Activated naive CD4-positive, alpha-beta T cell treated with anti-CD3 and anti-CD28 coated beads for 36 hours (primary cell): ENCODE measurements at regions of chr5 and their contacts with region 1.

Region 1: DNA sequence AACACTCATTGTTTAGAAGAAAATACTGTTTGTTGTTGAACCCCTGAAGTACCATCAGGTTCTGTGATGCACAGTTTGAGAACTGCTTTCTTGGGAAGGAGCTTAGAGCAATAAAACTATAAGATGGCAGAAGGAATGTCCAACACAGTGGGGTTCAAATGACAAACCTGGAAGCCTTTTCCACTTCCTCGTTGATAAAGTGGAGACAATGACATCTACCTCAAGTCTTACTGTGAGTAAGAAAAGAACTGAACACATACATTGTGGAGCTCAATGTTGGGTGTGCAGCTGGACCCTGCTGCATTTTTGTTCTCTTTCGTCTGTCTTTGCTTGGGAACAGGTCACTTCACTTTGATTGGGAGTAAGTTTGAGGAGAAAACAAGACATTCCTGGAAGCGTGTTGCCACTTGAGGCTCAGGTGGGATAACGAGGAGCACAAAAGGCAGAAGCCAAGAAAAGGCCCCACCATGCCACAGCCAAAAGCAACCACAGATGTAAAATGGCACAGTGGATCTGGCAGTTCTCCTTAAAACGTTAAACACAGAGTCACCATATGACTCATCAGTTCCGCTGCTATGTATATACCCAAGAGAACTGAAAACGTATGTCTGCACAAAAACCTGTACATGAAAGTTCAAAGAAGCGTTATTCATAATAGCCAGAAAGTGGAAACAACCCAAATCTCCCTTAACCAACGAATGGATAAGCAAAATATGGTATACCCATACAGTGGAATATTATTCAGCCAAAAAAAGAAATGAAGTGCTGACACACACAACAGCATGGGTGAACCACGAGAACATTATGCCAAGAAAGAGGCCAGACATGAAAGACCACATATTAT is 42.9 kb upstream of the SUB1 start:
- DNase-seq: peak; percentile 51
- H3K4me3 Mint-ChIP-seq: no peak overlapping the region
- H3K27ac Mint-ChIP-seq: peak overlapping the region; percentile 79
- H3K4me1 Mint-ChIP-seq: peaks cover 40% of the 10 kb centered on the region
- H3K27me3 Mint-ChIP-seq: no peaks in the 10 kb centered on the region

Region 2: GRCh38 chr5:31962871-31963307 is 579.5 kb before region 1 on chr5:
- CTCF ChIA-PET with region 1: no interaction called
- intact Hi-C with region 1: no loop called
- DNase-seq: no peak
- H3K4me3 Mint-ChIP-seq: no peak overlapping the region
- H3K27ac Mint-ChIP-seq: no peak overlapping the region
- H3K4me1 Mint-ChIP-seq: peaks cover 2% of the 10 kb centered on the region
- H3K27me3 Mint-ChIP-seq: no peaks in the 10 kb centered on the region

Region 3: GRCh38 chr5:32462618-32463017 is 79.8 kb before region 1 on chr5:
- CTCF ChIA-PET with region 1: no interaction called
- intact Hi-C with region 1: no loop called
- DNase-seq: peak; percentile 71
- H3K4me3 Mint-ChIP-seq: no peak overlapping the region
- H3K27ac Mint-ChIP-seq: peak overlapping the region; percentile 89
- H3K4me1 Mint-ChIP-seq: peaks cover 13% of the 10 kb centered on the region
- H3K27me3 Mint-ChIP-seq: no peaks in the 10 kb centered on the region

Region 4: DNA sequence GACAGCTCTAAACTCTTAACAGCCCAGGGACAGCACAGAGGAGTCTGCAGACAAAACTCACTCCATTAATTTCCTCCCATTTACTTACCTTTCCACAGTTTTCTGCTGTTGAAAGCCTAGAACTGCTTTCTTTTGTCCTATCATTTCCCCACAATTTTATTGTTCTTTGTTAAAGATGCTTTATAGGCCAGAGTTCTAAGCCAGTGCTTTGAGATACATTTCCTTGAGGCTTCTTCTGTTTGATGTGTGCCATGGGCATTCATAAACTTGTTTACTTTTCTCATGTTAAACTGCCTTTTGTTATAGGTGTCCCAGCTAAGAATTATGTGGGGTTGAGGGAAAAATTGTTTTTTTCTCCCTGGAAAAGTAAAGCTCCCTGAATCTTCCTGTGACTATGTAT is 17.0 kb after region 1 on chr5:
- CTCF ChIA-PET with region 1: no interaction called
- intact Hi-C with region 1: loop called (anchors 2 kb)
- DNase-seq: no peak
- H3K4me3 Mint-ChIP-seq: no peak overlapping the region
- H3K27ac Mint-ChIP-seq: no peak overlapping the region
- H3K4me1 Mint-ChIP-seq: peaks cover 2% of the 10 kb centered on the region
- H3K27me3 Mint-ChIP-seq: no peaks in the 10 kb centered on the region

Region 5: GRCh38 chr5:32572778-32573480 is 30.5 kb after region 1 on chr5:
- CTCF ChIA-PET with region 1: no interaction called
- intact Hi-C with region 1: loop called (anchors 1 kb)
- DNase-seq: no peak
- H3K4me3 Mint-ChIP-seq: no peak overlapping the region
- H3K27ac Mint-ChIP-seq: no peak overlapping the region
- H3K4me1 Mint-ChIP-seq: peaks cover 6% of the 10 kb centered on the region
- H3K27me3 Mint-ChIP-seq: no peaks in the 10 kb centered on the region

Region 6: GRCh38 chr5:32690153-32690552 is 147.7 kb after region 1 on chr5:
- CTCF ChIA-PET with region 1: no interaction called
- intact Hi-C with region 1: no loop called
- DNase-seq: peak; percentile 9
- H3K4me3 Mint-ChIP-seq: no peak overlapping the region
- H3K27ac Mint-ChIP-seq: no peak overlapping the region
- H3K4me1 Mint-ChIP-seq: peaks cover 2% of the 10 kb centered on the region
- H3K27me3 Mint-ChIP-seq: peaks cover 12% of the 10 kb centered on the region

Region 7: GRCh38 chr5:32734827-32735378 is 192.5 kb after region 1 on chr5:
- CTCF ChIA-PET with region 1: no interaction called
- intact Hi-C with region 1: no loop called
- DNase-seq: no peak
- H3K4me3 Mint-ChIP-seq: no peak overlapping the region
- H3K27ac Mint-ChIP-seq: no peak overlapping the region
- H3K4me1 Mint-ChIP-seq: no peaks in the 10 kb centered on the region
- H3K27me3 Mint-ChIP-seq: peaks cover 5% of the 10 kb centered on the region